Activated B cell treated with CpG ODN at 0.5 μM for 24 hours (primary cell): ENCODE measurements at regions of chr1 and their contacts with region 1.

Region 1: GRCh38 chr1:90850898-90851710 is 134.0 kb upstream of the BARHL2 start:
- DNase-seq: peak; percentile 66
- ATAC-seq: peak; percentile 99
- H3K4me3 Mint-ChIP-seq: peak overlapping the region; percentile 84
- H3K27ac Mint-ChIP-seq: no peak overlapping the region
- H3K4me1 Mint-ChIP-seq: peaks cover 14% of the 10 kb centered on the region
- H3K27me3 Mint-ChIP-seq: peaks cover 32% of the 10 kb centered on the region
- CTCF ChIP-seq: no peak

Region 2: GRCh38 chr1:88891318-88891950 is 1959.7 kb before region 1 on chr1 and contains the start of gene GTF2B:
- CTCF ChIA-PET with region 1: no interaction called
- POLR2A ChIA-PET with region 1: no interaction called
- intact Hi-C with region 1: loop called (anchors 2 kb)
- DNase-seq: peak; percentile 90
- ATAC-seq: peak; percentile 91
- H3K4me3 Mint-ChIP-seq: peak within 1 kb of the TSS; percentile 99
- H3K27ac Mint-ChIP-seq: peak within 1 kb of the TSS; percentile 96
- H3K4me1 Mint-ChIP-seq: peaks cover 40% of the 10 kb centered on the region
- H3K27me3 Mint-ChIP-seq: no peaks in the 10 kb centered on the region
- CTCF ChIP-seq: no peak
- total RNA-seq, gene GTF2B: 30.0 and 32.2 TPM in 2 replicates

Region 3: GRCh38 chr1:90721210-90722194 is 129.6 kb before region 1 on chr1:
- CTCF ChIA-PET with region 1: no interaction called
- POLR2A ChIA-PET with region 1: no interaction called
- intact Hi-C with region 1: loop called (anchors 5 kb)
- DNase-seq: no peak
- ATAC-seq: peak; percentile 40
- H3K4me3 Mint-ChIP-seq: no peak overlapping the region
- H3K27ac Mint-ChIP-seq: no peak overlapping the region
- H3K4me1 Mint-ChIP-seq: peaks cover 36% of the 10 kb centered on the region
- H3K27me3 Mint-ChIP-seq: peaks cover 79% of the 10 kb centered on the region
- CTCF ChIP-seq: no peak

Region 4: DNA sequence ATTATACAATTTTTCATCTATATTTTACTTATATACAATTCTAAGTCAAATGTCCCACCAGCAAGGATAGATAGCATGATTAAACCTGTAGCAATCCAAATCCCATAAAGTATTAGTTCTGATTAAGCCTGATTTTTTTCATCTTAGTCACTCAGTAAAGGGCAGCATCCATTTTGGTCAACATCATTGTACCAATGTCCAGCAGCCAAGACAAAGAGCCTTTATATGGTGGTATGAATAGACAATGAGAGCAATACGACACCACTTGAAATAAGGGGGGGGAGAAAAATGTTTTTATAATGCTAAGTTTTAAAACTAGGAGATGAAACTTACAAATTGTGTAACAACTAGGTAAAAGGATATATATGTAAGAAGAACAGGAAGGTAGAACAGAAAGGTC is 163.4 kb after region 1 on chr1:
- CTCF ChIA-PET with region 1: no interaction called
- POLR2A ChIA-PET with region 1: no interaction called
- intact Hi-C with region 1: no loop called
- DNase-seq: no peak
- ATAC-seq: no peak
- H3K4me3 Mint-ChIP-seq: no peak overlapping the region
- H3K27ac Mint-ChIP-seq: no peak overlapping the region
- H3K4me1 Mint-ChIP-seq: peaks cover 81% of the 10 kb centered on the region
- H3K27me3 Mint-ChIP-seq: no peaks in the 10 kb centered on the region
- CTCF ChIP-seq: no peak

Region 5: DNA sequence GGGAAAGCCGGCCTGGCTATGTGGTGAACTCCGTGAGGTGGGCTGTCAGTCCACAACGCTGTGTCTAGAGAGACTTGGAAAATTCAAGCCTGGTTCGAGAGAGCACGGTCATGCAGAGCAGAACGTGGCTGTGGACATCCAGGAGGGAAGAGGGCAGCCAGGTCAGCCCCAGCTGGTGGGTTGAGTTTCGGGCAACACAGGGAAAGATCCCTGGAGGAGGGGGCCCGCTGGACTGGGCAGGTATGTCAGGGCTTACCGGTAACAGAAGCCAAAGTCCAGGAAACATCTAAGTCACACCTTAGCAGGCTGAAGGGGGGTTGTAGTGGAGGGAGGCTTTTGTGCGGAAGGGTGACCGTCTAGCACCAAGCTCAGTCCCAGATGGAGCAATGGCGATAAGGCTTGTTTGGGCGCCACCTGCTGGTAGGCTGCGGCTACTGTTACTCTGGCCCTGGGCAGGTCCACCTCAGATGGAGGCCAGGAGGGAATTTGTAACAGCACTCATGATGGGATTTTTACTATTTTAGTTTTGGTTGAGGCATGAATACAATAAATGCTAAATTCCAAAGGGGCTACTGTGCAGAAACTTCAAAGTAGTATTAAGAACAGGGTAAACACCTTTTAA is 314.0 kb after region 1 on chr1:
- CTCF ChIA-PET with region 1: interaction called, 4 read pairs
- POLR2A ChIA-PET with region 1: no interaction called
- intact Hi-C with region 1: loop called (anchors 5 kb)
- DNase-seq: peak; percentile 59
- ATAC-seq: peak; percentile 93
- H3K4me3 Mint-ChIP-seq: no peak overlapping the region
- H3K27ac Mint-ChIP-seq: no peak overlapping the region
- H3K4me1 Mint-ChIP-seq: no peaks in the 10 kb centered on the region
- H3K27me3 Mint-ChIP-seq: peaks cover 2% of the 10 kb centered on the region
- CTCF ChIP-seq: peak; percentile 57

Region 6: DNA sequence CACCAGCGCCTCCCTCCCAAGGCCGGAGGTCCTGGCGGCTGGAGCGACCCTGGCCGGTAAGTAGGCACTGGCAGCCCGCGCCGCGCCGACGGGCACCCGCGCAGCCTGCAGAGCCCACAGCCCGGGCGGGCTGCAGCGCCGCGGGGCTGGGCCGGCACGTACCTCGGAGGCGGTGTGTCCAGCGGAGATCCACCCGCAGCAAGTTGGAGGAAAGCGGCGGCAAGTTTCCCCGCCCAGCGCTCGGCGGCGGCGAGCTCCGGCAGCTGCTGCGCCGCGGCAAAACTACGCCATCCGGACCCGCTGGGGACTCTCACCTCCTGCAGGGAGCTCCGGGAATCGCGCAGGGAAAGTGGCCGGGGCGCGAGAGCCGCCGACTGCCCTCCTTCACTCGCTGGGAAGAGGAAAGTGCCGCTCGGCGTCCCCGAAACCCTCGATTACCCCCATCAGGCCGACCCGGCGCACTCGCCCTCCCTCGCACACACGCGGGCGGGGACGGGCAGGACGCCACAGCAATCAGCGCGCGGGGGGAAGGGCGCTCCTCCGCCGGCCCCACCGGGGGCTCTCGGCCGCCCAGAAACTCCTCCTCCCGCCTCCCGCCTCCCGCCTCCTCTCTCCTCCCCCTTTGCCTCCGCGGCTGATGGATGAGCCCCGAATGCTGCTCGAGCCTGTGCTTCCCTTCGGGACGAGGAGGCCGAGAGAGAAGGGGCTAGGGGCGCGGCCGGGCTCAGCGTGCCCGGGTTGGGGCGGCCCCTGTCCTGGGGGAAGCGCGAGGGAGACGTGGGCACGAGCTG is 1034.8 kb after region 1 on chr1 and contains the start of gene TGFBR3:
- CTCF ChIA-PET with region 1: no interaction called
- POLR2A ChIA-PET with region 1: no interaction called
- intact Hi-C with region 1: loop called (anchors 10 kb)
- DNase-seq: peak; percentile 30
- ATAC-seq: peak; percentile 75
- H3K4me3 Mint-ChIP-seq: peak within 1 kb of the TSS; percentile 83
- H3K27ac Mint-ChIP-seq: no peak within 1 kb of the TSS
- H3K4me1 Mint-ChIP-seq: peaks cover 20% of the 10 kb centered on the region
- H3K27me3 Mint-ChIP-seq: peaks cover 38% of the 10 kb centered on the region
- CTCF ChIP-seq: no peak
- total RNA-seq, gene TGFBR3: 0.27 and 0.60 TPM in 2 replicates